Mammary epithelial cell (primary cell): ENCODE measurements at regions of chrX and their contacts with region 1.

Region 1: GRCh38 chrX:120560842-120561633 is at the start of gene CUL4B:
- DNase-seq: peak; percentile 89
- H3K4me3 ChIP-seq: peak within 1 kb of the TSS; percentile 59 to 85 (median 74)
- H3K27ac ChIP-seq: peak within 1 kb of the TSS; percentile 81
- H3K4me1 ChIP-seq: peaks cover 3% of the 10 kb centered on the region
- H3K27me3 ChIP-seq: no peaks in the 10 kb centered on the region
- CTCF ChIP-seq: no peak
- total RNA-seq, gene CUL4B: 25.9 to 51.2 TPM

Region 2: DNA sequence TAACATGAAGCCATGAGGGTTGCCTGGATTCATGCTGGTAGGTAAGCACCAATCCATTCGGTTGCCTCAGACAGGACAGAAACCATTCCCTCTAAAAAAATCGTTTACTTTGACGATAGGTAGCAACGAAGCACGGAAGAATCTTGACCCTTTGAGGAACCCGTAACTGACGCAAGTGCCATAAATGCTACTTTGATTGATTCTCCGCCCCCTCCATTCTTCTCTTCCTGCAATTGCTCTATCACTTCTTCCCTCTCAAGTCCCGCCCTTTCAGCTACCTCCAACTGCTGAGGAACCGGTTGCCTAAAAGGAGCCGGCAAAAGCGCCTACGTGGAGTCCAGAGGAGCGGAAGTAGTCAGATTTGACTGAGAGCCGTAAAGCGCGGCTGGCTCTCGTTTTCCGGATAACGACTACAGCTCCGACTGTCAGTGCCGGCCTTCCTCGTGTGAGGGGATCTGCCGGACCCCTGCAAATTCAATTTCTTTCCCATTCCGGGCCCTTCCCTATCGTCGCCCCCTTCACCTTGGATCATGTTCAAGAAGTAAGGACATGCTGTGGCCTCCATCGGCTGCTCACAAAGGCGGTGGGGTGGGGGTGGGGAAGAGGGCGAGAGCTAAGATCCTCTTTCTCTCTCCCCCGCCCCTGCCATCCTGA is 42.8 kb after region 1 on chrX and contains the start of gene MCTS1:
- CTCF ChIA-PET with region 1: interaction called, 6 read pairs
- dilution Hi-C with region 1: no loop called
- in situ Hi-C with region 1: no loop called
- intact Hi-C with region 1: loop called (anchors 1 kb)
- DNase-seq: peak; percentile 94
- H3K4me3 ChIP-seq: peak within 1 kb of the TSS; percentile 61 to 76 (median 69)
- H3K27ac ChIP-seq: peak within 1 kb of the TSS; percentile 82
- H3K4me1 ChIP-seq: no peaks in the 10 kb centered on the region
- H3K27me3 ChIP-seq: no peaks in the 10 kb centered on the region
- CTCF ChIP-seq: no peak
- total RNA-seq, gene MCTS1: 23.7 to 50.0 TPM

Region 3: GRCh38 chrX:120629667-120630537 is 68.9 kb after region 1 on chrX and contains the start of gene C1GALT1C1:
- CTCF ChIA-PET with region 1: no interaction called
- dilution Hi-C with region 1: no loop called
- in situ Hi-C with region 1: no loop called
- intact Hi-C with region 1: loop called (anchors 2 kb)
- DNase-seq: peak; percentile 90
- H3K4me3 ChIP-seq: peak within 1 kb of the TSS; percentile 52 to 70 (median 69)
- H3K27ac ChIP-seq: peak within 1 kb of the TSS; percentile 59
- H3K4me1 ChIP-seq: no peaks in the 10 kb centered on the region
- H3K27me3 ChIP-seq: no peaks in the 10 kb centered on the region
- CTCF ChIP-seq: peak in 1 of 2 donors; percentile 1
- total RNA-seq, gene C1GALT1C1: 10.4 to 17.0 TPM

Region 4: DNA sequence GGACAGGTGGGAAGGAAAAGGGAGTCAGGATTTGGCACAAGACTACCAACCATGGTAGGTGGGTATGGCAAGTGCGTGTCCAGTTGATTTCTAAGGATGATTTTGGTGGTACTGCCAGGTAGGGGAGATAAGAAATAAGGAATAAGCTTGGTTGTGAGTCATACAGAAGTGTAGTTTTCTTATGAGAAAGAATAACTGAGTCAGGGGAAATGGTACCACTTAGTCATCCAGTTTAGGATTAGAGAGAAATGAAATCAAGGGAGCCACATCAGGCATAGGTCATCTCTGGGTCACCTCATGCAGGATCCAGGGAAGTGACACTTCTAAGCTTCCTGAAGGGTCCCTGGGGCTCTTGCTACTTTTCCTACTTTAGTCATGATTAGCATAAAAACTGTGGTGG is 176.0 kb after region 1 on chrX:
- CTCF ChIA-PET with region 1: no interaction called
- dilution Hi-C with region 1: no loop called
- in situ Hi-C with region 1: no loop called
- intact Hi-C with region 1: loop called (anchors 10 kb)
- DNase-seq: peak; percentile 55
- H3K4me3 ChIP-seq: no peak overlapping the region
- H3K27ac ChIP-seq: no peak overlapping the region
- H3K4me1 ChIP-seq: peaks cover 15% of the 10 kb centered on the region
- H3K27me3 ChIP-seq: no peaks in the 10 kb centered on the region
- CTCF ChIP-seq: no peak

Region 5: DNA sequence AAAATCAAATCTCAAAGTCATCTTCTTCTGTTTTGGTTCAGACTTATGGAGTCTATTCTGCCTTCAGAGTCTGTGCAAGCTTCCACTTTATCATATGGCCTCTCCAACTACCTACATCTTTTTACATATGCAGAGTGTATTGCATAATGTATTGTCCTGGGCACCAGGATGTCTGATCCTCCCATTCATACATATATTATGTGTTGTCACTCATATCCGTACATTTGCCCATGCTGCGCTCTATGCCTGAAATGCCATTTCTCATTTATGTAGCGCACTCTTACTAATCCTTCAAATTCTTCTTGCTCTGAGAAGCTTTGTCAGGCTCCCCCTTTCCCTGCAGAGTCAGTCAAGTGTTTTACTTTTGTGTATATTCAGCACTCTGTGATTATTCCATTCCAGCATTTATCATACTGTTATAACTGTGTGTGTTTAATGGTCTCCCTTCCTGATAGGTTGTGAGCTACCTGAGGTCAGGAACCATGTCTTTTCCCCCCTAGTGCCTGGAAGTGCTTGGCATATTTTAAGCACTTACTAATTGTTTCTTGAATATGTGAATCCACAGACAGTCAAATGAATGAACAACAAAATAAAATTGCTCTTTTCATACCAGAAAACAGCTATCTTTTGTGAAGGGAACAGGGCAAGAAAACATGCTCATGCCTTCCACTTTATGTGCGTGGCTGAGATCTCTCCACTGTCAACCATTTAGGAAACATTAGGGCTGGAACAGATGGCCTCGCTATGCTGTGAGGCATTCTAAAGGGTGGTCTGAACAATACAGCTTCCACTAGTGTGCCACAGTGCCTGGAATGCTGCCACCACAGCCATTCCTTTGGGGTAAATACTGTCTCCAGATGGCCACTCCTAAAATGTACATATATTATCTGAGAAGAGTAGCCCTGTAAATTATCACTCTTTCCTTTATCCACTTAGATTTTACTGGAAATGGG is 568.2 kb after region 1 on chrX:
- CTCF ChIA-PET with region 1: no interaction called
- dilution Hi-C with region 1: no loop called
- in situ Hi-C with region 1: no loop called
- intact Hi-C with region 1: no loop called
- DNase-seq: no peak
- H3K4me3 ChIP-seq: no peak overlapping the region
- H3K27ac ChIP-seq: no peak overlapping the region
- H3K4me1 ChIP-seq: no peaks in the 10 kb centered on the region
- H3K27me3 ChIP-seq: no peaks in the 10 kb centered on the region
- CTCF ChIP-seq: no peak